Right cardiac atrium (tissue), 5 donors: ENCODE measurements at regions of chr9 and their contacts with region 1.

Region 1: DNA sequence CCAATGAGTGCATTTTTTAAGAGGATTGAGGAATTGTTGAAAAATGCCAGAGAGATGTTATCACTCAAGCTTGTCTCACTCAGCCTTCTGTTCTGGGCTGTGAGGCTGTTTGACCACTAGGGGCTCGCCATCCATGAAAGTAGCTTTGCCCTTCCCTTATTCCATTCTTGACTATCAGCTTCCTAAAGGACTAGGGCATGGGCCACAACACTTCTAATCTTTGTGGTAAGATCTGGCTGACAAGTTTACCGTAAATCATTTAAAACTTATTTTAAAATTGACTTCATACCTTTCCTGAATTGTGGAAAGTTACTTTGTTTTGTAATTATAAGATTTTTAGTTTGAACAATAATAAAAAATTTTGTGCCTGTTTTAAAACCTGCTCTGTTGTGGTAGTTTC is 49.5 kb downstream of the TJP2 start:
- DNase-seq: no peak
- ATAC-seq: peak; percentile 75 to 81
- H3K4me3 ChIP-seq: no peak overlapping the region
- H3K27ac ChIP-seq: no peak overlapping the region
- H3K4me1 ChIP-seq: peaks cover 3% of the 10 kb centered on the region
- H3K27me3 ChIP-seq: no peaks in the 10 kb centered on the region

Region 2: GRCh38 chr9:69174616-69175463 is 48.8 kb before region 1 on chr9:
- intact Hi-C with region 1: loop called in 1 of 4 experiments (anchors 10 kb)
- DNase-seq: peak in 1 of 3 donors; percentile 35
- ATAC-seq: peak; percentile 49 to 62
- H3K4me3 ChIP-seq: peak overlapping the region; percentile 47
- H3K27ac ChIP-seq: peak overlapping the region; percentile 42
- H3K4me1 ChIP-seq: no peaks in the 10 kb centered on the region
- H3K27me3 ChIP-seq: no peaks in the 10 kb centered on the region